IMR-90 (cell line): ENCODE measurements at regions of chr4 and their contacts with region 1.

Region 1: GRCh38 chr4:61520681-61521160 is 320.6 kb downstream of the ADGRL3 start:
- DNase-seq: peak; percentile 11
- ATAC-seq: no peak
- H3K4me3 ChIP-seq: no peak overlapping the region
- H3K27ac ChIP-seq: no peak overlapping the region
- H3K4me1 ChIP-seq: no peaks in the 10 kb centered on the region
- H3K27me3 ChIP-seq: no peaks in the 10 kb centered on the region
- CTCF ChIP-seq: no peak
- POLR2A ChIP-seq: no peak
- RAD21 ChIP-seq: no peak

Region 2: DNA sequence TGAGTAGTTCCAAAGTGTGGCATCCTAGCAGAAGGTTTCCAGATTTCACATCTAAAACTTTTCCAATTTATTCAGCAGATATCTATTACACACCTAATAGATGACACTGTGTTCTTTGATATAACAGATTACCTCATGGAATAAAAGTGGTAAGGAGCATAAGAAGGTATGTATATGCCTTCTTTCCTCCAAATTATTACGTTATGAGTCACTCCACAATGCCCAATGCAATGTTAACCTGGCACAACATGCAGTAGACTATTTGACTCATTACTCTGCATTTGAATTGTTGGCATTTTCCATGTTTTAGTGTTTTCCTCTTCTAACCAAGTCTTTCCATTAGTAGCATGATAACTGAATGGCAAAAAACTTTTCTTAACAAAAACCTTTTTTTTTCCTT is 63.0 kb after region 1 on chr4:
- CTCF ChIA-PET with region 1: no interaction called
- POLR2A ChIA-PET with region 1: no interaction called
- dilution Hi-C with region 1: no loop called
- in situ Hi-C with region 1: no loop called
- intact Hi-C with region 1: no loop called
- DNase-seq: peak; percentile 3
- ATAC-seq: no peak; the same call in 1 of the 2 replicates
- H3K4me3 ChIP-seq: no peak overlapping the region
- H3K27ac ChIP-seq: no peak overlapping the region
- H3K4me1 ChIP-seq: no peaks in the 10 kb centered on the region
- H3K27me3 ChIP-seq: no peaks in the 10 kb centered on the region
- CTCF ChIP-seq: no peak
- POLR2A ChIP-seq: no peak
- RAD21 ChIP-seq: no peak

Region 3: GRCh38 chr4:61693520-61693919 is 172.8 kb after region 1 on chr4:
- CTCF ChIA-PET with region 1: interaction called, 10 read pairs
- POLR2A ChIA-PET with region 1: no interaction called
- dilution Hi-C with region 1: no loop called
- in situ Hi-C with region 1: no loop called
- intact Hi-C with region 1: no loop called
- DNase-seq: no peak
- ATAC-seq: no peak
- H3K4me3 ChIP-seq: no peak overlapping the region
- H3K27ac ChIP-seq: no peak overlapping the region
- H3K4me1 ChIP-seq: no peaks in the 10 kb centered on the region
- H3K27me3 ChIP-seq: no peaks in the 10 kb centered on the region
- CTCF ChIP-seq: no peak
- POLR2A ChIP-seq: no peak
- RAD21 ChIP-seq: no peak

Region 4: DNA sequence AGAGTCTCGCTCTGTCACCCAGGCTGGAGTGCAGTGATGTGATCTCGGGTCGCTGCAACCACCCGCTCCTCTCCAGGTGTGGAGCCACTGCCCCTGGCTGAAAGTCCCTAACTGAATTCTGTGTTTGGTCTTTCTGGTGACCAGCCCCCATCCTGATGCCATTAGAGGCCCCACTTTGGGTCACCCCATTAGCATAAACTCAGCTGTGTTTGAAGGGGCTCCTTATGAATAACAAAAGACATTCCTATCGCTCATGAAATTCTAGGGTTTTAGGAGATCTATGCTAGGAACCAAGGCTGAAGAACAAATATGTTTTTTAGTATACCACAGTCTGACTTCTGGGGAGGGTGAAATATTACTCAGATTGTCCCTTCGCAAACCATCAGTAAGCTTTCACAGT is 332.3 kb after region 1 on chr4:
- CTCF ChIA-PET with region 1: no interaction called
- POLR2A ChIA-PET with region 1: no interaction called
- dilution Hi-C with region 1: no loop called
- in situ Hi-C with region 1: no loop called
- intact Hi-C with region 1: no loop called
- DNase-seq: no peak
- ATAC-seq: no peak
- H3K4me3 ChIP-seq: no peak overlapping the region
- H3K27ac ChIP-seq: no peak overlapping the region
- H3K4me1 ChIP-seq: no peaks in the 10 kb centered on the region
- H3K27me3 ChIP-seq: no peaks in the 10 kb centered on the region
- CTCF ChIP-seq: no peak
- POLR2A ChIP-seq: no peak
- RAD21 ChIP-seq: no peak